HEK293 (cell line): ENCODE measurements at regions of chr13 and their contacts with region 1.

Region 1: DNA sequence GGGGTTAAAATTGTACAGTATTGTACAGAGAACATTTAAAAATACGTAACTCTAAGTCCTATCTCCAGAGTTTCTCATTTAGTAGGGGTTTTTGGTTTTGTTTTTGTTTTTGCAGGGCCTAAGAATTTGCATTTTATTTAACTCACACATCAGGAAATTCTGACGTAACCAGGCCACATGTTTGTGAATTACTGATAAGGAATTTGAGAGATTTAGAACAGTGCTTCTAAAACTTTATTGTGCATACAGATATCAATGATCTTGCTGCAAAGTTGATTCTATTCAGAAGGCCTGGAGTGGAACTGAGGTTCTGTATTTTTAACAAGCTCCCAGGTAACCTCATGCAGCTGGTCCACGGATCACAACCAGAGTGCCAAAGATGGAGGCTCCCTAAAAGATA is 49.3 kb downstream of the LIG4 start:
- H3K4me3 ChIP-seq: no peak overlapping the region
- H3K27ac ChIP-seq: no peak overlapping the region
- H3K4me1 ChIP-seq: no peaks in the 10 kb centered on the region
- CTCF ChIP-seq: no peak

Region 2: DNA sequence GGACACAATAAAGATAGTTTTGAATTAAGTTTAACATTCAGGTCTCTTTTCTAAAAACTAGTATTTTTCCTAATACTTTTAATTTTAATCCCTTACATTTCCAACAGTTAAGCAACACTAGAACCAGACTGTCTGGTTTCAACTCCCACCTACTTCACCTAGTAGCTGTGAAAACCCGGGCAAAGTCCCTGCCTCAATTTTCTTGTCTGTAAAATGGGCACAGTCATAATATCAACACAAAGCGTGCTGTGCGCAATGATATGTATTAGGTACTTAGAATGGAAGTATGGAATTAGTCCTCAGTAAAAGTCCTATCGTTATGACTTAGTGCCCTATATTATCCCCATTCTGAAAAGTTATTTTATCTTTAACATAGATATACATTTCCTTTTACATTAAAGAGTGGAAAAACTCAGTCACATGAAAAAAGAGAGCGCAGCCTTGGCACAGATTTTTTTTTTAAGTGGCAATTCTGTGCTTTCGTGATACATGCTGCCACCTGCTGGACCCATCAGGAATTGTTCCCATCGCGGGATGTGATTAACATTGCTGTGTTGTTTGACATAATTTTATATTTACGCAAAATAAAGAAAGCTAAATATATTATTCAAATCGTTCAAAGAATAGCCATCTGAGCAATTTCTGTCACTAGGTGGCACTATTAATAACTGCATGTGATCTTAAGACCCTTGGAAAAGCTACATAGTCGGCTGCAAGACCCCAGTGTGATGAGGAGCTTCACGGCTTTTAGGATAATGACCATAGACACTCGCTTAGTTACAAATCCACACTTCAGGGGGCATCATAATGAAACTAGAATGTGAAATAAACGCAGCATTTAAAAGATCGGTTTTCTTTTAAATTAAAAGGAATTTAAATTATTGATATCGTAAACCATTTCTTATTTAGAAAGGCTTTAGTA is 10.6 kb before region 1 on chr13:
- CTCF ChIA-PET with region 1: interaction called, 18 read pairs
- POLR2A ChIA-PET with region 1: no interaction called
- H3K4me3 ChIP-seq: no peak overlapping the region
- H3K27ac ChIP-seq: no peak overlapping the region
- H3K4me1 ChIP-seq: no peaks in the 10 kb centered on the region
- CTCF ChIP-seq: no peak